Panc1 (cell line): ENCODE measurements at regions of chr7 and their contacts with region 1.

Region 1: GRCh38 chr7:77331938-77332695 is 84.0 kb downstream of the GSAP start:
- DNase-seq: peak; percentile 94
- ATAC-seq: peak; percentile 98
- H3K4me3 ChIP-seq: no peak overlapping the region
- H3K27ac ChIP-seq: no peak overlapping the region
- H3K4me1 ChIP-seq: no peaks in the 10 kb centered on the region
- H3K27me3 ChIP-seq: no peaks in the 10 kb centered on the region
- CTCF ChIP-seq: peak; percentile 78

Region 2: GRCh38 chr7:77252506-77252905 is 79.6 kb before region 1 on chr7:
- CTCF ChIA-PET with region 1: interaction called, 8 read pairs
- POLR2A ChIA-PET with region 1: no interaction called
- in situ Hi-C with region 1: no loop called
- intact Hi-C with region 1: loop called (anchors 5 kb)
- DNase-seq: no peak
- ATAC-seq: no peak
- H3K4me3 ChIP-seq: no peak overlapping the region
- H3K27ac ChIP-seq: no peak overlapping the region
- H3K4me1 ChIP-seq: no peaks in the 10 kb centered on the region
- H3K27me3 ChIP-seq: peaks cover 2% of the 10 kb centered on the region; the same call in 1 of the 2 replicates
- CTCF ChIP-seq: no peak